Activated CD8-positive, alpha-beta T cell treated with anti-CD3 and anti-CD28 coated beads for 36 hours (primary cell): ENCODE measurements at regions of chr12 and their contacts with region 1.

Region 1: DNA sequence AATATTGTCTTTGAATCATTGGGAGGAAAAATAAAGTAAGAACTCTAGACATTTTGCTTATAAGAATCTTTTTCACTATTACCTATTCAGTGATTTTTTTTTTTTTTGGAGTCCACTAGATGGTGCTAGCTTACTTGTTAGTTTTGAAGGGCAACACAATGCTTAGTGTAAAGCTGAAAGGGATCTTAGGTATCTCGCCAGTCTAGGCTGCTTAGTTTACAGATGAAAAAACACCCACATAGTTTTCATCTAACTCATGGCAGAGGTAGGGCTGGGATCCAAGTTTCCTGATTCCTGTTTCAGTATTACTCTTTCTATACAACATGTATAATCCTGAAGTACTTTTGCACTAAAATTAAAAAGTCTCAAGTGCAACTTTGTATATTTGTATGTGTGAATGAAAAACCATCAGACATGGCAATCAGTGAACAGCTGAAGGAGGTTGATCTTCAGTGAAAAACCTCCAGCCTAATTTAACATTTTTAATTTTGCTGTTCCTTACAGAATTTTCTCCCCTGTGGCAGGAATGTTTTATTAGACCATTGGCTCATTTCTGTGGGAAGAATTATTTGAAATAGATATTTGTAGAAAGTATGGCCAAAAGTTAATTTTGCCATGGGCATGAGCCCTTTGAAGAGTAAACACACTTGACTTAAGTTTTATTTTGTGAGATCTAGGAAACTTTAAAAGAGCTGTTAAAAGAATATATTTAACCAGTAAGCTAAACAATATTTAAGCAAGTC is 40.7 kb downstream of the LRRIQ1 start:
- DNase-seq: no peak
- ATAC-seq: no peak
- H3K4me3 Mint-ChIP-seq: no peak overlapping the region
- H3K27ac Mint-ChIP-seq: no peak overlapping the region
- H3K4me1 Mint-ChIP-seq: no peaks in the 10 kb centered on the region
- H3K27me3 Mint-ChIP-seq: no peaks in the 10 kb centered on the region
- CTCF ChIP-seq: no peak

Region 2: DNA sequence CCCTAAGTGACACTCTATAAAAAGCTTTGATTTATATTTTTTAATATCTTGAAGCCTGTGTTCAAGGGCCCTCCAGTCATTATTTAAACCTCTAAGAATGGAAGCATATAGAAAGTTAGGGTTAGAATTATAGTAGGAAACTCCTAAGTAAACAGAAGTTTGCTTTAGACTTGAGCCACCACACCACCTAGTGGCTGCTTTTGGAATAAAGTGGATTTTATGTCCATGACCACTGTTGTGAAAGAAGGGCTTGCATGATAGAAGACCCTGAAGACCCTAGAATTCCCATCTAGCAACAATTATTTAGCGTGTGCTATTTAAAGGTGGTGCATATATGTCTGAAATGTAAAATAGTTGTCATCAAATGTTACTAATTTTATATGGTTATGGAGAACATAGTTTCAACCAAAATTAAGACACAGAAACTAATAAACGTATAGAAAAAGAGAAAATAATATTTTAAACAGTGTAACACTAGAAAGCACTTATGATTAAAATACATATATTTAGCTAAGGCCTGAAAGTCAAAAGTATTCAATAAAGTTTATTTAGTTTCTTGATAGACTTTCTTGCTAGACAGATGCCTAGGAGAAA is 19.4 kb before region 1 on chr12:
- CTCF ChIA-PET with region 1: no interaction called
- POLR2A ChIA-PET with region 1: no interaction called
- intact Hi-C with region 1: no loop called
- DNase-seq: peak; percentile 41
- ATAC-seq: no peak
- H3K4me3 Mint-ChIP-seq: no peak overlapping the region
- H3K27ac Mint-ChIP-seq: no peak overlapping the region
- H3K4me1 Mint-ChIP-seq: no peaks in the 10 kb centered on the region
- H3K27me3 Mint-ChIP-seq: no peaks in the 10 kb centered on the region
- CTCF ChIP-seq: peak; percentile 81

Region 3: DNA sequence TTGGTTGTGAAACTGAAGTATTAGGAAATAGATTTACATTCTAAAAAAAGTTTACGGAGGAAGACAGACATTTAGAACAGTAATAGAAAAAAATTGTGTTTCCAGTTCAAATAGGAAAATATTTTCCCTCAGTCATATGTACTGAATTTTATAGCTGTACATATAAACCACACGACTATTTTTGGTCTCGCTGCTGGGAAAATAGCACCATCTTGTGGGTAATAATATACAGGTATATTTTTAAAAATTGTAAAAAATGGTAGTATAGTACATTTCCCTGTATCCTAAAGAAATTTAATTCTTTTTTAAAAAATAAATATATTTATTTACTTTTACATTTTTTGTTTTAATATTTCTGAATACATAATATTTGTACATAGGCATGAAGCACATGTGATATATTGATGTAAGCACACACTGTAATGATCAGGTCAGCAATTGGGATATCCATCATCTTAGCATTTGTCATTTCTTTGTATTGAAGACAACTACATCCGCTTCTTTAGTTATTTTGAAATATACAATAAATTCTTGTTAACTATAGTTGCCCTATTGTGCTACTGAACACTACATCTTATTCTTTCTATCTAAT is 371.8 kb after region 1 on chr12:
- CTCF ChIA-PET with region 1: no interaction called
- POLR2A ChIA-PET with region 1: no interaction called
- intact Hi-C with region 1: loop called (anchors 10 kb)
- DNase-seq: no peak
- ATAC-seq: no peak
- H3K4me3 Mint-ChIP-seq: no peak overlapping the region
- H3K27ac Mint-ChIP-seq: no peak overlapping the region
- H3K4me1 Mint-ChIP-seq: no peaks in the 10 kb centered on the region
- H3K27me3 Mint-ChIP-seq: peaks cover 1% of the 10 kb centered on the region
- CTCF ChIP-seq: no peak